Breast epithelium (tissue), 4 donors: ENCODE measurements at regions of chr1 and their contacts with region 1.

Region 1: DNA sequence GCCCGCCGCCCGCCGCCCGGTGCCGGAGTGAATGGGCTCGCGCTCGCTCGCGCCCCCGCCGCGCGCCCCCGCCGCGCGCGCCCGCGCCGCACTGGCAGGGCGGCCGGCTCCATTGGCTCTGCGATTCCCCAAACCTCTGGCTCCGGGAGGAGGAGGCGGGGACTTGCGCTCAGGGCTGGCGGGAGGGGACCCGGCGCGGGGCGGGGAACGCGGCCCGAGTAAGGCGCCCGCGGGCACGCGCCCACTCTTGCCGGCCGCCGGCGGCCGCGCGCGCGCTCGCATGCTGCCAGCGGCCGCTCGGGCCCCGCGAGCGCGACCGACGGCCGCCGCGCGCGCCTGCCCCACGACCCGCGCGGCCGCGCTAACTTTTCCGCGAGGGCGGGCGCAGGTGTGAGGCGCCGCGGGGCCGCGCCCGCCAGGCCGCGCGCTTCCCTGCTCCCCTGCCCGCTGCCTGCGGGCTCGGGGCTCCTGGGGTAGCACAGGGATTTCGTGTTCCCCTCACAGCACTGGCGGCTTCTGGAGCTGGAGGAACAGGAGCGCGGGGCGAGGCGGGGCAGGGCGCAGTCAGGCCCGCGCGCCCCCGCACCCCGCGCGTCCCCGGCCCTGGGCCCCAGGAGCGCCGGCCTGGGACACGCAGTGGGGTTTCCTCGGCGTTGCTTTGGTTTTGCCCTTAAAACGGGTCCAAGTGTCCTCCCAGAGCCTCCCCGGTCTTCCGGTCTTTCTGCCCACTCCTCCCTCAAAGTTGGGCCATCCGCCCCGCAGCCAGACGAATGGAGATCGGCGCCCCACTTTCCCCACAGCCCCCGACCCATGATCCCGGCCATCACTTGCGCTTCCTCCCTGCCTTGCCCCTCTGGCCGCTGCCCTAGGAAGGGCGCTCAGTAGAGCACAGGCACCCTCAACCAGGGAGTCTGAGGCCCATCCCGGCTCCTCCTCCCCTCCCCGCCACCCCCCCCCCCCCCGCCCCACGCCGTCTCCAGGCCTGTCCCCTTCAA is 101.5 kb downstream of the CASZ1 start:
- DNase-seq: peak; percentile 81 to 85
- H3K4me3 ChIP-seq: peak overlapping the region; percentile 44 to 91 (median 77)
- H3K27ac ChIP-seq: peak overlapping the region; percentile 94 to 95
- H3K4me1 ChIP-seq: peaks cover 9 to 22% of the 10 kb centered on the region in 2 donors
- H3K27me3 ChIP-seq: no peaks in the 10 kb centered on the region
- CTCF ChIP-seq: no peak
- POLR2A ChIP-seq: no peak

Region 2: GRCh38 chr1:10796019-10796944 is 101.4 kb after region 1 on chr1 and contains the start of gene CASZ1:
- intact Hi-C with region 1: loop called (anchors 10 kb)
- DNase-seq: peak; percentile 83 to 88
- H3K4me3 ChIP-seq: peak within 1 kb of the TSS; percentile 42 to 80 (median 76)
- H3K27ac ChIP-seq: peak within 1 kb of the TSS; percentile 87 to 88
- H3K4me1 ChIP-seq: no peaks in the 10 kb centered on the region
- H3K27me3 ChIP-seq: peaks cover 0 to 13% of the 10 kb centered on the region in 2 donors
- CTCF ChIP-seq: no peak
- POLR2A ChIP-seq: no peak
- total RNA-seq, gene CASZ1: 1.1 to 39.1 (median 32.4) TPM